ENCODE measurements at regions of chr2 and their contacts with region 1.

Region 1: DNA sequence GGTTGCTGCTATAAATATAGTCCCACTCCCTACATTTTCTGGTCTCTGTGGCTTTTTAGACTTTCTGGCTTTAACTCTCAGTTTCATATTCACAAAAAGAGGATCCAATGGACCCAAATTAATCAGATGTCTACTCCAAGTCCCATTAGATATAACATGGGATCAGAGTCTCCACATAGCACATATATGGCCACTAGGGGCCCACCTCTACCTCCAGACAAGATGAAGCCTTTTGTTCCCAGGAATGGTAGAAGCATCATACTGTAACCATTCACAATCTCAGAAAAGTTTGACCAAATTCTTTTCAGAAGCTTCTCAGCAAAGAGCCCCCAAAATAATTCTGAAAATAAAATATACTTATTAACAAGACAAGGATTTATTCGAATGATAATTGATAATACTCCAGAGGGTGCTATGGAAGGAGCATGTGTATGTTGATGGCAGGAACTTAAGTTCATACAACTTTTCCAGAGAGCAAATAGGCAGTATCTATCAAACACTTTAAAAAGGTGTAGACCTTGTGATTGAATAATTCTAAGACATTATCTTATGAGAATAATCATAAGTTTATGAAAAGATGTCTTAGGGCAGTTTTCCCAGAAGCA is 382.3 kb upstream of the CRIM1 start:
- DNase-seq: peak; percentile 43
- H3K4me3 Mint-ChIP-seq: no peak overlapping the region
- H3K27ac Mint-ChIP-seq: peak overlapping the region; percentile 83
- H3K4me1 Mint-ChIP-seq: peaks cover 14% of the 10 kb centered on the region
- H3K27me3 Mint-ChIP-seq: no peaks in the 10 kb centered on the region
- CTCF ChIP-seq: no peak

Region 2: DNA sequence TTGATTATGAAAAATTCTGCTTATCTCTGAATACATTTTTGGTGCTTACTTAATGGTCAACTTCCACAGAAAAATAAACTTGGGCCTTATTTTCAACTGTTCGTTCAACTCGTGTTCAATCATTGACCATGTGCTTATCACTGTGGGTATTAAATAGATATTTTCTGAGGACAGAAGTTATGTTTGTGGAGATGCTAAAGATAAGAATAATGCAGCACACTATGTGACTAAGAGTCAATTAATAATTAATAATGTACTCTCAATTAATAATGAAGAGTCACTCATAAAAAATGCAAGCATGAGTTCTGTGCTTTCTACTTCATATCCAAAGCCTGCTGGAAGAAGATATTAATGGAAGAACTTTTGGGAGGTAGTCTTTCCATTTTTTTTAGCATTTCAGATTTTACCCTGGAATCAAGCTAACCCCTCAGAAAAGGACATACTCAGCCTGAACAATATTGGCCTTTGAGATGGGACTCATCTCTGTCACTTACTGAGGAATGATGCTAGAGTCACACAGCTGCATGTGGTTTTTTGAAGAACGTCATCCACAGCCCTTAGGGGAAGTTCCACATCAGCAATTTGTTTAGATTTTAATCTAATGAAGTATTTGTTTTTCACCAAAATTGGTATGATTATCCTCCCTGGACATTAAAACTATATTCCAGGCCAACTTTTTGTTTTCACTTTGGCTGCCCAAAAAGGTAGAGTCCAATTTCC is 190.4 kb after region 1 on chr2:
- CTCF ChIA-PET with region 1: no interaction called
- intact Hi-C with region 1: loop called (anchors 10 kb)
- DNase-seq: no peak
- H3K4me3 Mint-ChIP-seq: no peak overlapping the region
- H3K27ac Mint-ChIP-seq: no peak overlapping the region
- H3K4me1 Mint-ChIP-seq: peaks cover 15% of the 10 kb centered on the region
- H3K27me3 Mint-ChIP-seq: no peaks in the 10 kb centered on the region
- CTCF ChIP-seq: no peak

Region 3: DNA sequence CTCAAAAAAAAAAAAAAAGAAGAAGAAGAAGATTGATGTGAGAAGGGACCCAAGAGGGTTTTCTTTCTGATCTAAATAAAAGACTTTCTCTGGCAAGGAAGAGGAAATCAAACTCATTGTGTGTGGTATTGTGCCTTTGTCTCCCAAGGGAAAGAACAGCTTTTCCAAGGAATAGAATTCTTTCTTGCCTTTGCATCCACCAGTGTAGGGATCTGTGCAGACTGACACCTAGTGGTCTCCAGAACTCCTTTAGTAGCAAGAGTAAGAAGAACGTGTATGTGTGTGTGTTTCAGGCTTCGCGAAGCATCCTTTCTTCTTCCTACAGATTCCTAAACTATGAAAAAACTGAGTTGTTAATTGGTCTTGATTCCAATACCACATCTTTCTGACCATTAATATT is 348.9 kb after region 1 on chr2:
- CTCF ChIA-PET with region 1: interaction called, 5 read pairs
- intact Hi-C with region 1: loop called (anchors 1 kb)
- DNase-seq: no peak
- H3K4me3 Mint-ChIP-seq: no peak overlapping the region
- H3K27ac Mint-ChIP-seq: no peak overlapping the region
- H3K4me1 Mint-ChIP-seq: peaks cover 4% of the 10 kb centered on the region
- H3K27me3 Mint-ChIP-seq: no peaks in the 10 kb centered on the region
- CTCF ChIP-seq: no peak

Region 4: GRCh38 chr2:36329746-36330472 is 356.7 kb after region 1 on chr2:
- CTCF ChIA-PET with region 1: no interaction called
- intact Hi-C with region 1: loop called (anchors 2 kb)
- DNase-seq: peak; percentile 26
- H3K4me3 Mint-ChIP-seq: no peak overlapping the region
- H3K27ac Mint-ChIP-seq: peak overlapping the region; percentile 34
- H3K4me1 Mint-ChIP-seq: peaks cover 30% of the 10 kb centered on the region
- H3K27me3 Mint-ChIP-seq: no peaks in the 10 kb centered on the region
- CTCF ChIP-seq: no peak

Region 5: GRCh38 chr2:36507408-36507812 is 534.2 kb after region 1 on chr2:
- CTCF ChIA-PET with region 1: no interaction called
- intact Hi-C with region 1: loop called (anchors 5 kb)
- DNase-seq: peak; percentile 72
- H3K4me3 Mint-ChIP-seq: no peak overlapping the region
- H3K27ac Mint-ChIP-seq: no peak overlapping the region
- H3K4me1 Mint-ChIP-seq: peaks cover 10% of the 10 kb centered on the region
- H3K27me3 Mint-ChIP-seq: no peaks in the 10 kb centered on the region
- CTCF ChIP-seq: peak; percentile 57

Region 6: GRCh38 chr2:36663851-36664695 is 690.8 kb after region 1 on chr2:
- CTCF ChIA-PET with region 1: no interaction called
- intact Hi-C with region 1: loop called (anchors 5 kb)
- DNase-seq: peak; percentile 45
- H3K4me3 Mint-ChIP-seq: no peak overlapping the region
- H3K27ac Mint-ChIP-seq: no peak overlapping the region
- H3K4me1 Mint-ChIP-seq: no peaks in the 10 kb centered on the region
- H3K27me3 Mint-ChIP-seq: no peaks in the 10 kb centered on the region
- CTCF ChIP-seq: peak; percentile 62

Measured in Calu3 (cell line).